ENCODE measurements at regions of chr9 and their contacts with region 1.

Region 1: DNA sequence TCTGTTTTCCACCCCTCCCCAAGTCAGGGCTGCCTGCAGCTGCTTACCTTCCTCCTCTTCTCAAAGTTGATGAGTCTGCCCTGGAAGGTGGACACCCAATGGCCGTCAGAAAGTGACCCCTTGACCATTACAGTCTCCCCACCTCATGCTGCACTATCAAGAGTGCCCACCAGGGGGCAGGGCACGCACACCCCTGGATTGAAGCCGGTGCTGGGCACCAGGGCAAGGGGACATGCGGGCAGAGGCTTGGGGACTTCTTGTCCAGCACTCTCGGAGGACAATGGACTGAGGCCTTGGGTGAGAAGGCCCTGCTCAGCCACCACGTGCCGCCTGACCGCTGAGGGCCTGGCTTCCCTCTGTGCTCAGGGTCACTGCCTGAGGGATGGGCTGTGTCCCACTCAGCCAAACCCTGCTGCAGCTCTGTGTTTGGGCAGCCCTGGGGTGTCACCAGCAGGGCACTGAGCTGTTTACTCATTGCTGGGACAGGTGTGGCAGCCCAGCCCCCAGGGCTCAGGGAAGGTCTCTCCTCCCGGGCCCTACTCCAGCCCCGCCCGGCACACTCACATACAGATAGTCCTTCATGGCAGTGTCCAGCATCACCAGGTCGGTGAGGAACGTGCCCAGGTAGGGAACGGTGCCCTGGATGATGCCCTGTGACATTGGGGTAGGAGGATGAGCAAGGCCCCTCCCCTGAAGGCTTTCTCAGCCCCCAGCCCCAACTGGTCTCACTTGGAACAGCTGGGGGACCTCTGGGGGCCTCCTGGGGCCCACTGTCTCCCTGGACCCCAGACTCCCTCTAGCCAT is 17.7 kb downstream of the RALGDS start:
- DNase-seq: peak; percentile 63
- H3K4me3 Mint-ChIP-seq: no peak overlapping the region
- H3K27ac Mint-ChIP-seq: peak overlapping the region; percentile 44
- H3K4me1 Mint-ChIP-seq: no peaks in the 10 kb centered on the region
- H3K27me3 Mint-ChIP-seq: no peaks in the 10 kb centered on the region

Region 2: DNA sequence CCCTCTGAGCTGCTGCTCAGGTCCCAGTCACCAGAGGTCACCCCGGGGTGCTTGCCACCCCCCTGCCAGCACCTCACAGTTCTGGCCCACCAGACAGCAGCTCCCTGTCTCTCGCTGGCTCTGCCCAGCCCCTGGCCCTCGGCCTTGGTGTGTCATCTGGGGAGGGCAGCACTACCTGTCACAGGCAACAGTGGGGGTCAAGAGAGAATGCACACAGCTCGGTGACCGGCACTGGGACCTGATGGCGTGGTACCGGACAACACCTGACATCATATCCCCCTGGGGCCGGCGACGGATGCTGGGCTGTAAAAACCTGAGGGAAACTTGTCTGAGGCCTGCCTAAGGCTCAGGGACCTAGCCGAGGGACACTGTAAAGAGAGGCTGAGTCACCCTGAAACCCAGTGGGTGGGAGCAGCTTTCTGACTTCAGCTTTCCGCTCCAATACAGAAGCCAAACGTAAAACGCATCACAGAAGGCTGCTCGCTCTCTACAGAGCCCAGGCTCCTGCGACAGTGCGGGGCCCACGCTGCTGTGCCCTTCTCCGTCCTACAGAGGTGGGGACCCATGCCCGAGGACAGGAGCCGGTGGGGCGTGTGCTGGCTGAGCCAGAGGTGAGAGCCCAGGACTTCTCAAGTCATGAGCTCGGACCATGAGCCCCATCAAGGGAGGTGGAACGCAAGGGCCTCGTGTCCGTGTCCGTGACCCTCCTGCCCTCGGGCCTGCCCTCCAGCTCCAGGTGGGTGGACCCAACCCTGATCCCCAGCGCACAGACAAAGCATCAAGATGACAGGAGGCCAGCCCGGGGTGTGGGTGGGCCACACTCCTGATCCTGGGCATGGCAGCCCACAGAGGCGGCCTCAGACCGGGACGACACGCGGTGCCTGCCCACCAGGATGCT is 12.3 kb after region 1 on chr9:
- CTCF ChIA-PET with region 1: interaction called, 15 read pairs
- POLR2A ChIA-PET with region 1: interaction called, 4 read pairs
- intact Hi-C with region 1: no loop called
- DNase-seq: peak; percentile 89
- H3K4me3 Mint-ChIP-seq: peak overlapping the region; percentile 56
- H3K27ac Mint-ChIP-seq: peak overlapping the region; percentile 91
- H3K4me1 Mint-ChIP-seq: peaks cover 68% of the 10 kb centered on the region
- H3K27me3 Mint-ChIP-seq: no peaks in the 10 kb centered on the region